ENCODE measurements at regions of chr19 and their contacts with region 1.

Region 1: GRCh38 chr19:6424939-6425731 is 524 bp upstream of the KHSRP start:
- H3K4me3 Mint-ChIP-seq: peak overlapping the region; percentile 73
- H3K27ac Mint-ChIP-seq: peak overlapping the region; percentile 95
- H3K4me1 Mint-ChIP-seq: peaks cover 52% of the 10 kb centered on the region
- H3K27me3 Mint-ChIP-seq: peaks cover 4% of the 10 kb centered on the region

Region 2: DNA sequence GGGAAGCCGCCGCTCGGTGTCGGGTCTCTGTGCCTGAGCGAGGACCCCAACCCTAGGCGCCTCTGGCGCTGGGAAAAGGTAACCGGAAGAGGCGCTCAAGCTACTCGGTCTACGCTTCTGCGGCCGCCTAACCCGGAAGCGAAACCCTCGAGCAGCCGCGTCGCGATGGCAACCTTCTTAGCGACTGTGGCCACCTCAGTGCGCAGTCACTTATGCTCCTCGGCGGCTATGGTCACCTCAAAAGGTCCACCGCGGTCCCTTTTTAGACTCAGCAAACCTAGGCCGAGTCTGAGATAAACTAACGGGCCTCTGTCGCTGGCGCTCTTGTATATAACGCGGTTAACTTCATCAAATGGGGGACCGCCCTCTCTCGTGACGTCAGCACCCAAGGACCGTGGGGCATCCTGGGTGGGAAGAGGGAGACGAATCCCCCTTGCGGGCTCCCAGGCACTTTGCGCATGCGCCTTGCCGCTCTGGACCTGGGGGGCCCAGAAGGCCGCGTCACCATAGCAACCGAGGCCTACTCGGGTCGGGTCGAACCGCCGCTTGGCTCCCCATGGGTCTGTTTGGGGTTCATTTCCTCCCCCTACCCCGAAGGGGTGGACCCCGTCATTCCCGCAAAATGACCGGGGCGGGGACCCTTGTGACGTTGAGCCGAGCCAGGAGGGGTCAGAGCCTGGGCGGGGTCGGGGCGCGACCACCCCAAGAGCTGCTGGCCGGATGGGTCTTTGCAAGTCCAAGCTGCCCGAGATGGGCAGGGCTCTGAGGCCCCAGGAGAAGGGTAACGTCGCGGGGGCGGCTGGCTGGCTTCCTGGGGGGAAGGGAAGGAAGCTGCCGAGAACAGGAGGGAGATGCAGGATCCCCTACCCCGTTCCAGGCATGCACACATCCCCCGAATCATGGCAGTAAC is 31.8 kb before region 1 on chr19 and contains the start of gene GTF2F1:
- intact Hi-C with region 1: loop called (anchors 2 kb)
- H3K4me3 Mint-ChIP-seq: peak within 1 kb of the TSS; percentile 97
- H3K27ac Mint-ChIP-seq: peak within 1 kb of the TSS; percentile 97
- H3K4me1 Mint-ChIP-seq: peaks cover 36% of the 10 kb centered on the region
- H3K27me3 Mint-ChIP-seq: no peaks in the 10 kb centered on the region